K562 (cell line): ENCODE measurements at regions of chr5 and their contacts with region 1.

Region 1: GRCh38 chr5:154654486-154655371 is 100.4 kb upstream of the LARP1 start:
- DNase-seq: peak in 2 of 4 experiments; percentile 32 to 53
- ATAC-seq: peak; percentile 20
- H3K4me3 ChIP-seq: no peak overlapping the region
- H3K27ac ChIP-seq: peak overlapping the region; percentile 60
- H3K4me1 ChIP-seq: peaks cover 25 to 31% of the 10 kb centered on the region in 2 experiments
- H3K27me3 ChIP-seq: no peaks in the 10 kb centered on the region
- CTCF ChIP-seq: no peak
- EP300 ChIP-seq: peak; percentile 59; the same call in 1 of the 2 replicates
- POLR2A ChIP-seq: no peak
- RAD21 ChIP-seq: no peak

Region 2: DNA sequence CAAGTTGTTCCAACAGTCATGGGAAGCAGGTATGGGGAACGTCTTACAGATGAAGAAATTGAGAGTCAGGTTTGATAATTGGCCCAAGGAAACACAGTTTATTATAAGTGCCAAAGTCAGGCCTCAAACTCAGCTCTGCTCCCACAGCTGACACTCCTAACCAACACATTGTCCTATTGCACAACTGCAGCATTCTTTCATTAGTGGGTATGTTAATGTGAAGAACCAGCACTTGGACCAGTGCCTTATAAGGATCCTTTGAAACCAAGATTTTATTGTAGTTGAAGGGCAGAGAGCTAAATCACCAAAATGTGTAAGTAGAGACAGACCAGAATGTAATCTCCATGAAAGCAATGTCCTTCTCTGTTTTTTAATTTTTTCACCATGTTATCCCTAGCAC is 1108.2 kb before region 1 on chr5:
- CTCF ChIA-PET with region 1: no interaction called
- POLR2A ChIA-PET with region 1: no interaction called
- in situ Hi-C with region 1: no loop called
- intact Hi-C with region 1: no loop called
- DNase-seq: no peak
- ATAC-seq: no peak
- H3K4me3 ChIP-seq: no peak overlapping the region
- H3K27ac ChIP-seq: no peak overlapping the region
- H3K4me1 ChIP-seq: 0 out of 5 replicates have a peak, but pooled peaks cover 0 to 2% of the 10 kb centered on the region in 2 experiments
- H3K27me3 ChIP-seq: no peaks in the 10 kb centered on the region
- CTCF ChIP-seq: no peak
- EP300 ChIP-seq: no peak
- POLR2A ChIP-seq: no peak
- RAD21 ChIP-seq: no peak

Region 3: DNA sequence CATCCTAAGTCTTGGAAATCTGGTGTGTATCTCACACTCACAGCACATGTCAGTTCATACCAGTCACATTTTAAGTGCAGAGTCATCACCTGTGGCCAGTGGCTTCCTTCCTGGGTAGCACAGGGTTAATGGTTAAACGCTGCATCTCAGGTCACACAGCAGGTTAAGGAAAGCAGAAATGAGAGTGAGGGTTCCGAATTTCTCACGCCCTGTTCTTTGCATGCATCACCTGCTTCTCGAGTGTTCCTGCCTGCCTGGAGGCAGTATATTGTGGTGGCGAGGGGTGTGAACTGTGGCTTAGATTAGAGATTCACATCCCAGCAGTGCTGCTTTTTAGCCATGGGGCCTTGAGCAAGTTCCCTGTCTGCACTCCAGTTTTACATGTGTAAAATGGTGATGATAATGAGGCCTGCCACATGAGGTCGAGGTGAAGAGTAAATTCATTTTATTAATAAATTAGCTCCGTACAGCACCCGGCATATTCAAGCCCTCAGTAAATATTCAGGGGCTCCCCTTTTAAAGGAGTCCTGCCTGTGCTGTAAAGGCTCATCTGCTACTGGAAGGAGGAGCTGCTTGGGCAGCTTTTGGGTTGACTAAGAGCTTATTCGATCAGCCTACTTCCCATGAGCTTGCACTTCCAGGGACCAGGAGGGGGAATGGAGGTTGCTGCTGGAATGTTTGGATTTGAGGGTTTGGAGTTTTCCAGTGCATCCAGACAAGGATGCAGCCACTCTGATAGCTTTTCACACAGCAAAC is 270.1 kb before region 1 on chr5:
- CTCF ChIA-PET with region 1: no interaction called
- POLR2A ChIA-PET with region 1: no interaction called
- in situ Hi-C with region 1: no loop called
- intact Hi-C with region 1: no loop called
- DNase-seq: no peak
- ATAC-seq: peak; percentile 33; the same call in 1 of the 3 replicates
- H3K4me3 ChIP-seq: no peak overlapping the region
- H3K27ac ChIP-seq: no peak overlapping the region
- H3K4me1 ChIP-seq: peaks cover 4 to 10% of the 10 kb centered on the region in 2 experiments; a peak in 3 of 5 replicates
- H3K27me3 ChIP-seq: no peaks in the 10 kb centered on the region
- CTCF ChIP-seq: no peak
- EP300 ChIP-seq: no peak
- POLR2A ChIP-seq: no peak
- RAD21 ChIP-seq: no peak

Region 4: GRCh38 chr5:154683101-154683880 is 28.6 kb after region 1 on chr5:
- CTCF ChIA-PET with region 1: no interaction called
- POLR2A ChIA-PET with region 1: interaction called, 3 read pairs
- in situ Hi-C with region 1: no loop called
- intact Hi-C with region 1: loop called (anchors 2 kb)
- DNase-seq: no peak
- ATAC-seq: peak; percentile 26; the same call in 2 of the 3 replicates
- H3K4me3 ChIP-seq: peak overlapping the region; percentile 43
- H3K27ac ChIP-seq: peak overlapping the region; percentile 83
- H3K4me1 ChIP-seq: peaks cover 12% of the 10 kb centered on the region in 2 experiments; a peak in 4 of 5 replicates
- H3K27me3 ChIP-seq: no peaks in the 10 kb centered on the region
- CTCF ChIP-seq: no peak; a peak in 1 of 6 replicates
- EP300 ChIP-seq: no peak
- POLR2A ChIP-seq: no peak
- RAD21 ChIP-seq: no peak

Region 5: GRCh38 chr5:154761046-154761736 is 106.5 kb after region 1 on chr5:
- CTCF ChIA-PET with region 1: no interaction called
- POLR2A ChIA-PET with region 1: no interaction called
- in situ Hi-C with region 1: loop called (anchors 5 kb)
- intact Hi-C with region 1: no loop called
- DNase-seq: no peak
- ATAC-seq: no peak
- H3K4me3 ChIP-seq: no peak overlapping the region
- H3K27ac ChIP-seq: peak overlapping the region; percentile 38; the same call in 2 of the 3 replicates
- H3K4me1 ChIP-seq: peaks cover 18 to 49% of the 10 kb centered on the region in 2 experiments
- H3K27me3 ChIP-seq: no peaks in the 10 kb centered on the region
- CTCF ChIP-seq: no peak
- EP300 ChIP-seq: no peak
- POLR2A ChIP-seq: no peak
- RAD21 ChIP-seq: no peak

Region 6: GRCh38 chr5:154811653-154812365 is 157.1 kb after region 1 on chr5:
- CTCF ChIA-PET with region 1: interaction called, 24 read pairs
- POLR2A ChIA-PET with region 1: interaction called, 3 read pairs
- in situ Hi-C with region 1: loop called (anchors 10 kb)
- intact Hi-C with region 1: loop called (anchors 1 kb)
- DNase-seq: peak; percentile 57 to 71 (median 62)
- ATAC-seq: peak; percentile 84
- H3K4me3 ChIP-seq: no peak overlapping the region
- H3K27ac ChIP-seq: no peak overlapping the region
- H3K4me1 ChIP-seq: peaks cover 3 to 4% of the 10 kb centered on the region in 2 experiments; a peak in 3 of 5 replicates
- H3K27me3 ChIP-seq: no peaks in the 10 kb centered on the region
- CTCF ChIP-seq: peak; percentile 80 to 88 (median 82)
- EP300 ChIP-seq: no peak
- POLR2A ChIP-seq: no peak
- RAD21 ChIP-seq: peak; percentile 85

Region 7: GRCh38 chr5:154940772-154941620 is 286.3 kb after region 1 on chr5 and contains the start of gene MRPL22:
- CTCF ChIA-PET with region 1: no interaction called
- POLR2A ChIA-PET with region 1: no interaction called
- in situ Hi-C with region 1: no loop called
- intact Hi-C with region 1: loop called (anchors 5 kb)
- DNase-seq: peak; percentile 92 to 97 (median 94)
- ATAC-seq: peak; percentile 63
- H3K4me3 ChIP-seq: peak within 1 kb of the TSS; percentile 69
- H3K27ac ChIP-seq: peak within 1 kb of the TSS; percentile 79
- H3K4me1 ChIP-seq: peaks cover 26 to 34% of the 10 kb centered on the region in 2 experiments; a peak in 4 of 5 replicates
- H3K27me3 ChIP-seq: no peaks in the 10 kb centered on the region
- CTCF ChIP-seq: peak in 1 of 3 experiments; percentile 2; a peak in 1 of 6 replicates
- EP300 ChIP-seq: no peak
- POLR2A ChIP-seq: peak; percentile 95
- RAD21 ChIP-seq: no peak
- polyA plus RNA-seq, gene MRPL22: 411 to 424 TPM